Panc1 (cell line): ENCODE measurements at regions of chr4 and their contacts with region 1.

Region 1: DNA sequence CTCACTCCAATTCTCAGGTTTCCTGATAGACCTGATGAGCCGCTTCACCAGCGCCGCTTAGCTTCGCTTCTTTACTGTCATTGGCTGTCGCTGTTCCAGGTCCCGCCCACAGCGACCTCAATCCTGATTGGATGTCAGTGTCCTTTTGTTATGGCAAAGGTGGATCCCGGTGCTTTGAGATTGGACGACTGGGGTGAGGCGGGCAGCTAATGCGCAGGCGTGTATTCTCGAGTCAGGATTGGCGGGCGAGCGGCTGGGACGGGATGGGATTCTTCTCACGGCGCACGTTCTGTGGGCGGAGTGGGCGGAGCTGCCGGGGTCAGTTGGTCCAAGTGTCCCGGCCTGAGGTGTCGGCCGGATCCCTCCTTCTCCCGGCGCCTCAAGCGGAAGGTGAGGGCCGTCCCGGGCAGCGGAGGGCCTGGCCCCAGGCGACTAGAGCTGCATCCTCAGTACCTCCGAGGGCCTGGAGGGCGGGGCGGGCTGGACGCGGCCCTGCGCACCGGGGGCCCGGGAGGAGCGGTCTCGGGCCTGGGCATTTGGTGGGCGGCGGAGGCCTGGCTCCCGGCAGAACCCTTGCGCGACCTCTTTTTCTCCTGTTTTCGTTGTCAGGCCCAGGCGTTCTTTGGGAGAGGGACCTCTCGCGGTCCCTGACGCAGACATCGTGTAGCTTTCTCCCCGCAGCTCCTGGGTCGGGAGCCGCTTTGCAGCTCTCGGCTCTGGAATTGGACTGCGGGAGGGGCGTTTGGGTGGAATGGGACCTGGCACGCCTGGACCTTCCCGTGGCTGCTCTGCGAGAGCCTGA is at the start of gene SCOC:
- DNase-seq: peak; percentile 96
- ATAC-seq: peak; percentile 96
- H3K4me3 ChIP-seq: peak within 1 kb of the TSS; percentile 92 to 93
- H3K27ac ChIP-seq: peak within 1 kb of the TSS; percentile 88
- H3K4me1 ChIP-seq: peaks cover 13% of the 10 kb centered on the region
- H3K27me3 ChIP-seq: no peaks in the 10 kb centered on the region
- CTCF ChIP-seq: no peak
- total RNA-seq, gene SCOC: 30.2 TPM

Region 2: DNA sequence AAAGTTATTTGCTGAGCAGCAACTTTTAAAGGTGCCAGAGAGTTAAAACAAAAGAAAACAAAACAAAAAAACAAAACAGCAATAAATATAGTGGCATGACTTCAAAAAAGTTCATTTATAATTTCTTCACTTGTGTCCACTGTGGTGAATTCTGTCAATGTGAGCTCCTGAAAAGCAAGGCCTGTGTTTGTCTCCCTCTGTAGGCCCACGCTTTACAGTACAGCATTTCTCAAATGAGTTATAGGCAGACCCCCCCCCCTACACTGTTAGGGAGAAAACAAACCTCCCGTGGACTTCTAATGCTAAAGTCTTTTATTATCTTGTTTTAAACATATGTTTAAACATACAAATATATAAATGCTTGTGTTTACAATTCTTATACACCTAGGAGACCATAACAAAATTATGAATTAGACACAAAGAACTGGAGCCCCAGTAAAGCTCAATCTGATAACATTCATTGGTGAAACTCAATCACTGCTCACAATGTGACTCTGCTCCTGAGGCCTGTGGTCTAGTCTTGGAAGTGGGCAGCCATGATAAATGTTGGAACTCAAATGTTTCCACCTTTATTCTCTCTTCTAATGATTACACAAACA is 47.0 kb before region 1 on chr4:
- CTCF ChIA-PET with region 1: interaction called, 4 read pairs
- POLR2A ChIA-PET with region 1: interaction called, 10 read pairs
- in situ Hi-C with region 1: no loop called
- intact Hi-C with region 1: no loop called
- DNase-seq: no peak
- ATAC-seq: peak; percentile 74
- H3K4me3 ChIP-seq: no peak overlapping the region
- H3K27ac ChIP-seq: no peak overlapping the region
- H3K4me1 ChIP-seq: no peaks in the 10 kb centered on the region
- H3K27me3 ChIP-seq: no peaks in the 10 kb centered on the region
- CTCF ChIP-seq: peak; percentile 74